ENCODE measurements at regions of chr1 and their contacts with region 1.

Region 1: DNA sequence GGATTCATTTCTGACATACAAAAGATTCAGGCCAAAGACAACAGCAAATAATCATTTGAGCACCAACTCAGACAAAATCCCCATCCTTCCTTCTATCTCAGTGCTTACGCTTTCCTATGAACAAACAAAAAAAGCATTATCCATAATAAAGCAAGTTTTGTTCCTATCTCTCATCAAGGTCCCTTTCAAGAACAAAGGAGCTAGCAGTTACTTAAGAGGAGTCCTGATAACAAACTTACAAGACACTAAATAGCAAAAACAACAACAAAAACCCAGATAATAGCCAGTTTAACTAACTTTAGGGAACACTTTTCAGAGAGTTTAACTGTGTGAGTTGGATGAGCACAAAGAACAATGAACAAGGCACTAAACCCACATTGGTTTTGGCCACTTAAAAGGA is 10.5 kb downstream of the EVI5 start:
- DNase-seq: no peak
- H3K4me3 Mint-ChIP-seq: no peak overlapping the region
- H3K27ac Mint-ChIP-seq: no peak overlapping the region
- H3K4me1 Mint-ChIP-seq: no peaks in the 10 kb centered on the region
- H3K27me3 Mint-ChIP-seq: peaks cover 11% of the 10 kb centered on the region

Region 2: DNA sequence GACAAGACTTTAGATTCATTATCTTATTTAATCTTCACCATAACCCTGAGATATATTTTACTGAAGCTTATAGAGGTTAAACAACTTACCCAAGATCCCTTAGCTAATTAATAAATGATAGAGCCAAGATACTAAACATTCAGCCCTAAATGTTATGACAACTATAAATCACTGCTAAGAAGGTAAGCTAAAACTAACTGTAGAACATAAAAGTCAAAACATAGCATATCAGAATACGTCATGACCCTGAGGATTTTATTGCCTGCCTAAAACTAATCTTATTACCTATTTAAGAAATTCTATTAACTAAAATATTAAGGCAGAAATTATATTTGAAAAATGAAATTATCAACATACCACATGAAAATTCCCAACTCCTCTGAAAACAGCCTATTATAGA is 12.1 kb before region 1 on chr1:
- CTCF ChIA-PET with region 1: no interaction called
- intact Hi-C with region 1: no loop called
- DNase-seq: no peak
- H3K4me3 Mint-ChIP-seq: no peak overlapping the region
- H3K27ac Mint-ChIP-seq: no peak overlapping the region
- H3K4me1 Mint-ChIP-seq: no peaks in the 10 kb centered on the region
- H3K27me3 Mint-ChIP-seq: no peaks in the 10 kb centered on the region

Region 3: GRCh38 chr1:93537924-93538323 is 763.5 kb after region 1 on chr1:
- CTCF ChIA-PET with region 1: no interaction called
- intact Hi-C with region 1: loop called (anchors 5 kb)
- DNase-seq: no peak
- H3K4me3 Mint-ChIP-seq: no peak overlapping the region
- H3K27ac Mint-ChIP-seq: no peak overlapping the region
- H3K4me1 Mint-ChIP-seq: peaks cover 1% of the 10 kb centered on the region
- H3K27me3 Mint-ChIP-seq: peaks cover 2% of the 10 kb centered on the region

Measured in activated naive CD4-positive, alpha-beta T cell treated with anti-CD3 and anti-CD28 coated beads for 36 hours (primary cell).